ENCODE measurements at regions of chr6 and their contacts with region 1.

Region 1: DNA sequence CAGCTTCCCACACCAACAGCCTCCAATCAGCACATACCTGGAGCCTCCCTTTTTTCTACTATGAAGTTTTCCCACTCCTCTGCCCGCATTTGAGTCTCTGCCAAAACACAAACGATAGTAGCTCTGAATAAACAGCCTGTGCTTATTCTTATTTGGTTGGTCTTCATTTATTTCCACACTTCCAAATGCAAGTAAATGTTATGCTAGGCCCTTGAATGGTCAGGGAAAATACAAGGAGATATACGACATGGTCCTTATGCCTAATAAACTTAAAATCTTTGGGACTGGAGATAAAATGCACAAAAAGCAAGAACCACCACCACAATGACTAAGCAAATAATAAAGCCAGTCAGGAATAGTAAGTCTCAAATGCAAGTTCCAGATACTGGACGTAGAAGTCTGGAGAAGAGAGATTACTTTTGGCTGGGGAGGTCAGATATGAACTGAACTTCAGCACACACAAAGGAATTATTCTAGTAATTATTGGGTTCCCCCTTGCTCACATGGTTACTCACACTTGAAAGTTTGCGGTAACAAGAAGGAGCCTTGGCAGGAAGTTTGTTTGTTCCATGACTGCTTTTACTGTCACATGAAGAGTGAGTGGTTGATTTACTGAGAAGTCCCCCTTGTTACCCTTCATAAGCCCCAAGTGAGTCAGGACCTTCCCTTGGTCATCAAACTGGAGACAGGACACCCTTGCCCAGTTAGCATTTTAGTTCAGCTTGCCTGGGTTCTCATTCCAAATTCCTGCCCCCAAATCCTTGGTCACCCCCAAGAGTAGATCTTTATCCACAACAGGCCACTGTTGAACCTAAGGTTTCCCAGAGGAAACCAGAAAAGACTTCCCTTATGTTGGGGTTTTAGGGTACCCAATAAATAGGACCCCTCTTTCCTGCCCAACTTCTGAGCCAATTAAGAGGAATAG is 511.2 kb upstream of the JARID2 start:
- DNase-seq: peak; percentile 55
- ATAC-seq: peak; percentile 37
- H3K4me3 Mint-ChIP-seq: peak overlapping the region; percentile 67
- H3K27ac Mint-ChIP-seq: peak overlapping the region; percentile 100
- H3K4me1 Mint-ChIP-seq: peaks cover 99% of the 10 kb centered on the region
- H3K27me3 Mint-ChIP-seq: no peaks in the 10 kb centered on the region

Region 2: GRCh38 chr6:14270925-14271791 is 463.5 kb before region 1 on chr6:
- CTCF ChIA-PET with region 1: no interaction called
- POLR2A ChIA-PET with region 1: no interaction called
- intact Hi-C with region 1: loop called in 1 of 2 experiments (anchors 5 kb)
- DNase-seq: peak; percentile 83
- ATAC-seq: peak; percentile 93
- H3K4me3 Mint-ChIP-seq: no peak overlapping the region
- H3K27ac Mint-ChIP-seq: peak overlapping the region; percentile 69
- H3K4me1 Mint-ChIP-seq: peaks cover 56% of the 10 kb centered on the region
- H3K27me3 Mint-ChIP-seq: no peaks in the 10 kb centered on the region

Region 3: GRCh38 chr6:14542670-14543366 is 191.9 kb before region 1 on chr6:
- CTCF ChIA-PET with region 1: no interaction called
- POLR2A ChIA-PET with region 1: interaction called, 4 read pairs
- intact Hi-C with region 1: loop called in 1 of 2 experiments (anchors 1 kb)
- DNase-seq: peak; percentile 90
- ATAC-seq: peak; percentile 99
- H3K4me3 Mint-ChIP-seq: no peak overlapping the region
- H3K27ac Mint-ChIP-seq: peak overlapping the region; percentile 79
- H3K4me1 Mint-ChIP-seq: peaks cover 41% of the 10 kb centered on the region
- H3K27me3 Mint-ChIP-seq: peaks cover 2% of the 10 kb centered on the region

Region 4: GRCh38 chr6:14711056-14711703 is 23.5 kb before region 1 on chr6:
- CTCF ChIA-PET with region 1: interaction called, 19 read pairs
- POLR2A ChIA-PET with region 1: interaction called, 11 read pairs
- intact Hi-C with region 1: loop called (anchors 1 kb)
- DNase-seq: peak; percentile 82
- ATAC-seq: peak; percentile 85
- H3K4me3 Mint-ChIP-seq: peak overlapping the region; percentile 42
- H3K27ac Mint-ChIP-seq: peak overlapping the region; percentile 100
- H3K4me1 Mint-ChIP-seq: peaks cover 57% of the 10 kb centered on the region
- H3K27me3 Mint-ChIP-seq: no peaks in the 10 kb centered on the region

Region 5: DNA sequence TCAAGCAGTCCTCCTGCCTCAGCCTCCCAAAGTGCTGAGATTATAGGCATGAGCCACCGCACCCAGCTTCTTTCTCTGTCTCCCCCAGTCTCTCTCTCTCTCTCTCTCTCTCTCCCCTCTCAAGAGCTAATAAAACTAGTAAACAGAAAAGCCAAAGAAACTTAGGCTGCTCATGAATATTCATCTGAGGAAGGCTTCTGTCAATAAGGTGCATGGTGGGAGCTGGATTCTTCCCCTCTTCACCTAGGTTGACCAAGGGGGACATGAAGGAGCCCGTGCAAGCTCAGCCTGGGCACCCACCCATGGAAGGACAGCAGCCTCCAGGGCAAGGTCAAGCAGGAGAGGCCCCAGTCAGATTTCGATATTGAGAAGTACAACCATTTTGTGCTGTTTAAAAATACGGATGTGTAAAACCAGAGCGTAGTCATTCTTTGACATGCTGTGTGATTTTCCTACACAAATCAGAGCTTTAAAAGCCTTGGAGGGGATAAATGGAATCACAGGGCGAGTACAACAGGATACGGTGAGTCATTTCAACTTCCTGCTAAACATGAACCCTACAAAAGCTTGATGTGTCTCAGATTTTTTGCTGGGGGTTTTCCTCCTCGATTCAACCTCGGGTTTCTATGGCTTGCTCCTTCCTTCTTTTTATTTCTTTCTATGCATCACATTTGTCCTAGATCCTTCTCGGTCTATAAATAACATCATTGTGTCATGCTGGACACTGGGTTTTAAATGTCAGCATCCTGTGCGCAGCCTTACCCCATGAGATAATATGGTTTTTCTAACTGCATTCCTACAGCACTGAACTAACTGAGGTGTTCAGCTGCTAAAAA is 142.3 kb after region 1 on chr6:
- CTCF ChIA-PET with region 1: interaction called, 3 read pairs
- POLR2A ChIA-PET with region 1: interaction called, 9 read pairs
- intact Hi-C with region 1: loop called (anchors 1 kb)
- DNase-seq: peak; percentile 52
- ATAC-seq: peak; percentile 74
- H3K4me3 Mint-ChIP-seq: peak overlapping the region; percentile 47
- H3K27ac Mint-ChIP-seq: peak overlapping the region; percentile 99
- H3K4me1 Mint-ChIP-seq: peaks cover 78% of the 10 kb centered on the region
- H3K27me3 Mint-ChIP-seq: no peaks in the 10 kb centered on the region

Region 6: GRCh38 chr6:15299430-15300131 is 564.9 kb after region 1 on chr6:
- CTCF ChIA-PET with region 1: no interaction called
- POLR2A ChIA-PET with region 1: no interaction called
- intact Hi-C with region 1: loop called in 1 of 2 experiments (anchors 5 kb)
- DNase-seq: peak; percentile 48
- ATAC-seq: no peak
- H3K4me3 Mint-ChIP-seq: peak overlapping the region; percentile 18
- H3K27ac Mint-ChIP-seq: peak overlapping the region; percentile 69
- H3K4me1 Mint-ChIP-seq: peaks cover 83% of the 10 kb centered on the region
- H3K27me3 Mint-ChIP-seq: no peaks in the 10 kb centered on the region